ENCODE measurements at regions of chr13 and their contacts with region 1.

Region 1: DNA sequence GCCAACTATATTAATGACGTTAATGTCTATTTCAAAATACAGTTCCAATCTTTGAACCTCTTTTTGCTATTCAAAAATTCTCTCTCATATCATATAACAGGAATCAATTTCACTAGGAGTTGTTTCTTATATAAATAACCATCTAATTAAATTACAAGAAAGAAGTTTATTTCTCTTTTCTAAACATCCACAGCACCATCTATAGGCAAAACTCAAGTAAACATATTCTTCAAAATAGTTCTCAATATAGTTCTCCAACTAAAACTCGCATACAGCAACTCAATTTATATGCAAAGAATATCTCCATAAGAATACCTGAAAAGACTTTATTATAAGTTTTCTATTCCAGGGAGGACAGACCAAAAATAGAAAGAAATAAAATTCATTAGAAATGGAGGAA is 65.6 kb downstream of the RBM26 start:
- DNase-seq: no peak
- H3K4me3 ChIP-seq: no peak overlapping the region
- H3K27ac ChIP-seq: no peak overlapping the region
- H3K4me1 ChIP-seq: no peaks in the 10 kb centered on the region
- H3K27me3 ChIP-seq: no peaks in the 10 kb centered on the region
- CTCF ChIP-seq: no peak

Region 2: GRCh38 chr13:78085434-78086225 is 1254.9 kb before region 1 on chr13:
- intact Hi-C with region 1: no loop called
- DNase-seq: no peak
- H3K4me3 ChIP-seq: no peak overlapping the region
- H3K27ac ChIP-seq: no peak overlapping the region
- H3K4me1 ChIP-seq: no peaks in the 10 kb centered on the region
- H3K27me3 ChIP-seq: no peaks in the 10 kb centered on the region
- CTCF ChIP-seq: no peak

Region 3: DNA sequence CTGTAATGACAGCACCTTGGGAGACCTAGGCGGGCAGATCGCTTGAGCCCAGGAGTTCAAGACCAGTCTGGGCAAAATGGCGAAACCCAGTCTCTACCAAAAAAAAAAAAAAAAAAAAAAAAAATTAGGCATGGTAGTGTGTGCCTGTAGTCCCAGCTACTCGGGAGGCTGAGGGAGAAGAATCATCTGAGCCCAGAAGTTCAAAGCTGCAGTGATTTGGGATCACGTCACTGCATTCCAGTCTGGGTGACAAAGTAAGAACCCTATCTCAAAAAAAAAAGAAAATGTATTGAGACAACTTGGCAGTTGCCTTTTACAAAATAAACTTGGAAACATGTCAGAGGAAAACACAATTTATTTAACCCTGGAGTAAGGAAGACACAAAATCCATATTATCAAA is 38.8 kb after region 1 on chr13:
- intact Hi-C with region 1: loop called (anchors 5 kb)
- DNase-seq: no peak
- H3K4me3 ChIP-seq: no peak overlapping the region
- H3K27ac ChIP-seq: no peak overlapping the region
- H3K4me1 ChIP-seq: no peaks in the 10 kb centered on the region
- H3K27me3 ChIP-seq: no peaks in the 10 kb centered on the region
- CTCF ChIP-seq: no peak

Region 4: DNA sequence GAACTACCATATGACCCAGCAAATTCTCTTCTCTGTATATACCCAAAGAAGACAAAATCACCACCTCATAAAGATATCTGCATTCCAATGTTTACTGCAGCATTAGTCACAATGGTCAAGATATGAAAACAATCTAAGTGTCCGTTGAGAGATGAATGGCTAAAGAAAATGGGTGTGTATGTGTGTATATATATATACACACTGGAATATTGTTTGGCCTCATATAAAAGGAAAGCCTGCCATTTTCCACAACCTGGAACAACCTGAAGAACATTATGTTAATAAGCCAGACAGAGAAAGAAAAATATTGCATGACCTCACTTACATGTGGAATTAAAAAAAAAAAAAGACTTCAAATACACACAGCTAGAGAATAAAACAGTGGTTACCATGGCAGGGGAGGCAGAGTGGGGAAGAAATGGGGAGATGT is 95.1 kb after region 1 on chr13:
- intact Hi-C with region 1: no loop called
- DNase-seq: no peak
- H3K4me3 ChIP-seq: no peak overlapping the region
- H3K27ac ChIP-seq: no peak overlapping the region
- H3K4me1 ChIP-seq: no peaks in the 10 kb centered on the region
- H3K27me3 ChIP-seq: no peaks in the 10 kb centered on the region
- CTCF ChIP-seq: no peak

Region 5: GRCh38 chr13:79767126-79767525 is 426.6 kb after region 1 on chr13:
- intact Hi-C with region 1: no loop called
- DNase-seq: no peak
- H3K4me3 ChIP-seq: no peak overlapping the region
- H3K27ac ChIP-seq: no peak overlapping the region
- H3K4me1 ChIP-seq: no peaks in the 10 kb centered on the region
- H3K27me3 ChIP-seq: no peaks in the 10 kb centered on the region
- CTCF ChIP-seq: no peak